Panc1 (cell line): ENCODE measurements at regions of chr1 and their contacts with region 1.

Region 1: DNA sequence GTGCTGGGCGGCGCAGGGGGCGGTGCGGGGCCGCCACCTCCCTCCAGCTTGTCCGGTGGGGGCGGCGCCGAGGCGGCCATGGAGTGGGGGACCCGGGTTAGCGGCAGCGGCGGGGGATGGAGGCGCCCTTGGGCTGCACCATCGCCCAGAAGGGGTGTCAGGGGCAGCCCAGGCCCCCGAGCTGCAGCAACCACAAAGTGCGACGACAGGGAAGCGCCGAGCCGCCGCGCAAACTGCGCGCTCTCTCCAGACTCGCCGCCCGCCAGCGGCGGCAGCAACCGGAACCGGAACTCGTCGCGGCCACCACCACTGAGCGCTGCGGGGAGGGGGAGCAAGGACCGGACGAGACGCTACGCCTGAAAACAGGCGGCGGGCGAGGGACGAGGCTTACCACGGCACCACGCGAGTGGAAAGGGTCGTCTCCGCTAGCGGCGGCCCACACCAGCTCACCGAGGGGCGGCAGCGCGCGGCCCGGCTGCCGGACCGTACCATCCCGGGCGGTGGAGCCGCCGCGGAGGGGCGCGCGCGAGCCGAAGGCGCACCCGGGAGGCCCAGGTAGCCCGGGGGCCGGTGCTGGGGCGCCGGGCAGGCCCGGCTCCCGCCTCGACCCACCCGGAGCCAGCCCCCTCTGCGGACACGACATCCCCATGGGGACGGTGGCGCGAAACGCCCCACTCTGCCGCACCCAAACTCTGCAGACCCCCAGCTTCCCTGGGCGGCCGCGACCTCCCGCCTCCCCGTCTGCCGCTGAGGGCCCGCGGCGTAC is at the start of gene PYGO2:
- DNase-seq: no peak
- ATAC-seq: peak; percentile 86
- H3K4me3 ChIP-seq: peak within 1 kb of the TSS; percentile 64 to 66
- H3K27ac ChIP-seq: peak within 1 kb of the TSS; percentile 96
- H3K4me1 ChIP-seq: peaks cover 36% of the 10 kb centered on the region
- H3K27me3 ChIP-seq: no peaks in the 10 kb centered on the region
- CTCF ChIP-seq: peak; percentile 91; the same call in 1 of the 2 replicates
- total RNA-seq, gene PYGO2: 41.1 TPM

Region 2: DNA sequence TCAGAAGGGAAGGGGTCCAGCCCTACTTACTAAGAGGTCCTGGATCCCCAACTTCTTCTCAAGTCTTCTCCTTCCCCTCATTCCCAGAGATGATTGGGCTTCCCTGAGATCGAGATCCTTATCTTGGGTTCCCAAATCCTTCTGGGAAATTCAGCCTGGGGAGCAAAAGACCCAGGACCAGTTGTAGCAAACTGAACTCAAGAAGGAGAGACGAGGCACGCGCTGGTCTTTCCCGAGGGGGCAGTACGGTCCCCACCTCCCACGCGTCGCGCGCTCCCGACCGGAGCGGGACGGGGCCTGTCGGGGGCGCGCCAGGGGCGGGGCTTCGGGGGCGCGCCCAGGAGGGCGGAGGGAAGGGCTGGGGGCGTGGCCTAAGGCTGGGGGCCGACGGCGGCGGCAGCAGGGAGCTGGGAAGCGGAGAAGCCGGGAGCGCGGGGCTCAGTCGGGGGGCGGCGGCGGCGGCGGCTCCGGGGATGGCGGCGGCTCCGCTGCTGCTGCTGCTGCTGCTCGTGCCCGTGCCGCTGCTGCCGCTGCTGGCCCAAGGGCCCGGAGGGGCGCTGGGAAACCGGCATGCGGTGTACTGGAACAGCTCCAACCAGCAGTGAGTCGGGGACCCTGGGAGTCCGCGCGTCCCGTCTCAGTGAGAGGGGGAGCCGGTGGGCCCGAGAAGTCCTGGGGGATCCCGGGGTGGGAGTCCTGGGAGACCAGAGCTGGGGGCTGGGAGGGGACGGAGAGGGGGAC is 117.0 kb after region 1 on chr1 and contains the start of gene EFNA3:
- CTCF ChIA-PET with region 1: interaction called, 6 read pairs
- POLR2A ChIA-PET with region 1: interaction called, 12 read pairs
- in situ Hi-C with region 1: no loop called
- intact Hi-C with region 1: no loop called
- DNase-seq: no peak
- ATAC-seq: peak; percentile 64
- H3K4me3 ChIP-seq: peak within 1 kb of the TSS; percentile 33 to 53
- H3K27ac ChIP-seq: no peak within 1 kb of the TSS
- H3K4me1 ChIP-seq: peaks cover 10% of the 10 kb centered on the region
- H3K27me3 ChIP-seq: peaks cover 9% of the 10 kb centered on the region
- CTCF ChIP-seq: no peak
- total RNA-seq, gene EFNA3: 2.3 TPM

Region 3: DNA sequence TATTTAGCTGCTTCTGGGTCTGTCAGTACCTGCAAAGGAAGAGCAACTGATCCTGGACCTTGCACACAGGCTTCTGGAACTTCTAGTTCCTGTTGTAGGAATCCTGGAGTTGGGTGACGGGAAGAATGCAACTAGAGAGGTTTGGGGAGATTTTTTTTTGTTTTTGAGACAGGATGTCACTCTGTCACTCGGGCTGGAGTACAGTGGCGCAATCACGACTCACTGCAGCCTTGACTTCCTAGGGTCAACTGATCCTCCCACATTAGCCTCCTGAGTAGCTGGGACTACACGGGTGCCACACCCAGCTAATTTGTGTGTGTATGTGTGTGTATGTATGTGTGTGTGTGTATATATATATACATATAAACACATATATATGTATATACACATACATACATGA is 274.8 kb after region 1 on chr1:
- CTCF ChIA-PET with region 1: interaction called, 12 read pairs
- POLR2A ChIA-PET with region 1: no interaction called
- in situ Hi-C with region 1: no loop called
- intact Hi-C with region 1: no loop called
- DNase-seq: no peak
- ATAC-seq: no peak
- H3K4me3 ChIP-seq: no peak overlapping the region
- H3K27ac ChIP-seq: no peak overlapping the region
- H3K4me1 ChIP-seq: peaks cover 4% of the 10 kb centered on the region; the same call in 1 of the 2 replicates
- H3K27me3 ChIP-seq: no peaks in the 10 kb centered on the region
- CTCF ChIP-seq: no peak